Activated CD4-positive, alpha-beta T cell treated with anti-CD3 and anti-CD28 coated beads, Interleukin-2, amount 10 ng/mL, durations not matched to agents 24 days and 14 days (primary cell): ENCODE measurements at regions of chr11 and their contacts with region 1.

Region 1: DNA sequence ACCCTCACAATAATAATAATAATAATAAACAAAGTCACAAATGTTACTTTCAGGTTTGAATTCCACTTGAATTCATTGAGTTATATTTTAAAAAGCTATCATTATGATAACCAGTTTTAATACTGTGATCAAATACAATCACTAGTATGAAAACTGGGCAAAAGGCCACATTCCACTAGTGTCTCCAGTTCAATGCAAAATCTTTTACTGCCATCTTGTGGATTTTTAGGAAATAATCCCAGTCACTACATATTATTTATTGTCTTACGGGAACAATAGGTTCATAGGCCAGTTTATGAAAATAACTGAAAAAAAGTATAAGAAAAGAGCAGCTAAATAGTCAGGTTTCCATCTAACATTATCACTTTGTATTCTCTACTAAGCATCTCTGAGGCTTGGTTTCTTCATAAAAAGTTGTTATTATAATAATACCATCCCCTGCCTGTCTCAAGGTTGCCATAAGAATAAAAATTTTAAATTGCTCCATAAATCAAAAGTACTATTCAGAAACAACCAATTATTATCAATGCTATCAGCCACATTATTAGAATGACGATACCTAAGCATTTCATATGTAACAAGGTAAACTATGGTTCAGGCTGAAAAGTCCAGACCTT is 533.9 kb upstream of the CCDC90B start:
- DNase-seq: no peak
- H3K4me3 Mint-ChIP-seq: no peak overlapping the region
- H3K27ac Mint-ChIP-seq: no peak overlapping the region
- H3K4me1 Mint-ChIP-seq: no peaks in the 10 kb centered on the region
- H3K27me3 Mint-ChIP-seq: no peaks in the 10 kb centered on the region

Region 2: DNA sequence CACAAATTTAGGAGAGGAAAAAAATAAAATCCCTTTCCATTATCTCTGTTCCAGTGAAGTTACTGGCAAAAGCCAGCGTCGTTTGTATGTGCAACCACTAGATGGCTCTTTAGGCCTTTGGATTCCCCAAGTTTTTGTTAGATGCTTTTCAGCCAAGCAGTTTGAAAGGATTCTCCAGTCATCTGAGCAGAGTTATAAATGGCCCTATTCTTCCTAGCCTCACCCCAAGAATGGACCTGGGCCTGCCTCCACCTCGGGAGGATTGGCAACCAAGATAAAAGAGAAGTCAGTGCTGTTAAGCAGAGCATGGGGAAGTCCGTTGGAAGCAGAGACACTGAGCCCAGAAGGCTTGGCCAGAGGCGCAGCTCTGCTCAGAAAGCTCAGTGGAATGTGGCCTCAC is 1101.7 kb before region 1 on chr11:
- intact Hi-C with region 1: loop called (anchors 10 kb)
- DNase-seq: peak; percentile 63
- H3K4me3 Mint-ChIP-seq: no peak overlapping the region
- H3K27ac Mint-ChIP-seq: no peak overlapping the region
- H3K4me1 Mint-ChIP-seq: no peaks in the 10 kb centered on the region
- H3K27me3 Mint-ChIP-seq: peaks cover 2% of the 10 kb centered on the region

Region 3: GRCh38 chr11:83292709-83293456 is 527.2 kb before region 1 on chr11:
- intact Hi-C with region 1: loop called (anchors 1 kb)
- DNase-seq: peak; percentile 81
- H3K4me3 Mint-ChIP-seq: peak overlapping the region; percentile 60
- H3K27ac Mint-ChIP-seq: no peak overlapping the region
- H3K4me1 Mint-ChIP-seq: peaks cover 2% of the 10 kb centered on the region
- H3K27me3 Mint-ChIP-seq: peaks cover 27% of the 10 kb centered on the region

Region 4: GRCh38 chr11:83648610-83649527 is 171.2 kb before region 1 on chr11:
- intact Hi-C with region 1: no loop called
- DNase-seq: no peak
- H3K4me3 Mint-ChIP-seq: no peak overlapping the region
- H3K27ac Mint-ChIP-seq: no peak overlapping the region
- H3K4me1 Mint-ChIP-seq: no peaks in the 10 kb centered on the region
- H3K27me3 Mint-ChIP-seq: peaks cover 2% of the 10 kb centered on the region

Region 5: GRCh38 chr11:83836883-83837654 is 17.0 kb after region 1 on chr11:
- intact Hi-C with region 1: no loop called
- DNase-seq: peak; percentile 59
- H3K4me3 Mint-ChIP-seq: no peak overlapping the region
- H3K27ac Mint-ChIP-seq: no peak overlapping the region
- H3K4me1 Mint-ChIP-seq: peaks cover 3% of the 10 kb centered on the region
- H3K27me3 Mint-ChIP-seq: peaks cover 8% of the 10 kb centered on the region